Activated CD4-positive, alpha-beta T cell treated with anti-CD3 and anti-CD28 coated beads for 36 hours (primary cell): ENCODE measurements at regions of chr1 and their contacts with region 1.

Region 1: DNA sequence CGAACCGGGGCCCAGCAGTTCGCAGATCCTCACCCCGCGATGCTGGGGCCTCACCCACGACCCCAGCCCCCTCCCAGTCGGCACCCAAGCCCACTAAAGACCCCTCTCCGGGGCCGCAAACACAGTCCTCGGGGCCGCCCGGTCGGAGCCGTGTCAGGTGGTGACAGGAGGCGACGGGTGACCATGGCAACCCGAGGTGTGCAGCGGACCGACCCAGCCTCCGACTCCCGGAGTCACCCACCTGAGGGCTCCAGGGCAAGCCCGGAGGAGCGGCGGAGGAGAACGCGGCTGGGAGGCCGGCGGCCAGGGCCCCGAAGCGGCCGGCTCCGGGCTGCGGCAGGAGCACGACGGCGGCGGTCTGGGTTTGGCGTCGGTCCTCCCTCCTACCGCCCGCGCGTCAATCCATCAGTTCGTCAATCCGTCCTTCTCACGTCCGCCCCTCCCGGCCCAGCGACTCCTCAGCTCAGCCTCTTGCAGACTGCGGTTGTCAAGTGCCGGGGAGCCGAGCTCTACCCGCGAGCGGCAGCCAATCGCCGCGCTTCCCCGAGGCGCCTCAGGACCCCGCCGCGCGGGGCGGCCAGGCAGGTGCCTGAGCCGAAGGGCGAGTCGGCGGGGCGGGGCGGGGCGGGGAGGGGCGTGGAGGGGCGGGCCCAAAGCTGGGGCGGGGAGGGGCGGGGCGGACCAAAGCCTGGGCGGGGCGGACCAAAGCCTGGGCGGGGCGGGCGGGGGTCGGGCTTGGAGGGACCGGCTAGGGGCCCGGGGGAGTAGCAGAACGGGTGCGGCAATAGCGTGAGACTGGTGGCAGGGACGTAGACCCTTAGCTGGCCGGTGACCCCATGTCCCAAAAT is at the start of gene WDR47:
- DNase-seq: peak; percentile 98
- ATAC-seq: peak; percentile 99
- H3K4me3 Mint-ChIP-seq: peak within 1 kb of the TSS; percentile 82
- H3K27ac Mint-ChIP-seq: peak within 1 kb of the TSS; percentile 65
- H3K4me1 Mint-ChIP-seq: peaks cover 16% of the 10 kb centered on the region
- H3K27me3 Mint-ChIP-seq: no peaks in the 10 kb centered on the region
- total RNA-seq, gene WDR47: 6.9 to 7.6 TPM

Region 2: DNA sequence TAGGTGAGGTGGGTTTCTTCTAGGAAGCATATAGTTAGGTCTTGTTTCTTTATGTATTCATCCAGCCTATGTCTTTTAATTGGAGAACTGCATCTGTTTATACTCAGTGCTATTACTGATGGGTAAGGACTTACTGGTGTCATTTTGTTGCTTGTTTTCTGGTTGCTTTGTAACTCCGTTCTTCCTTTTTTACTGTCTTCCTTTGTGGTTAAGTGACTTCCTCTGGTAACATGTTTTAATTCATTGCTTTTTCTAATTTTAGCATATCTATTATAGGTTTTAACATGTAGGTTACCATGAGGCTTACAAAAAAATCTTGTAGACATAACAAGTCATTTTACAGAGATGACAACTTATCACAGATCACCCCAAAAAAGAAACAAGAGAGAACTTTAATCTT is 1237.7 kb before region 1 on chr1:
- CTCF ChIA-PET with region 1: no interaction called
- POLR2A ChIA-PET with region 1: no interaction called
- intact Hi-C with region 1: no loop called
- DNase-seq: no peak
- ATAC-seq: peak; percentile 74
- H3K4me3 Mint-ChIP-seq: no peak overlapping the region
- H3K27ac Mint-ChIP-seq: peak overlapping the region; percentile 5
- H3K4me1 Mint-ChIP-seq: peaks cover 33% of the 10 kb centered on the region
- H3K27me3 Mint-ChIP-seq: no peaks in the 10 kb centered on the region

Region 3: DNA sequence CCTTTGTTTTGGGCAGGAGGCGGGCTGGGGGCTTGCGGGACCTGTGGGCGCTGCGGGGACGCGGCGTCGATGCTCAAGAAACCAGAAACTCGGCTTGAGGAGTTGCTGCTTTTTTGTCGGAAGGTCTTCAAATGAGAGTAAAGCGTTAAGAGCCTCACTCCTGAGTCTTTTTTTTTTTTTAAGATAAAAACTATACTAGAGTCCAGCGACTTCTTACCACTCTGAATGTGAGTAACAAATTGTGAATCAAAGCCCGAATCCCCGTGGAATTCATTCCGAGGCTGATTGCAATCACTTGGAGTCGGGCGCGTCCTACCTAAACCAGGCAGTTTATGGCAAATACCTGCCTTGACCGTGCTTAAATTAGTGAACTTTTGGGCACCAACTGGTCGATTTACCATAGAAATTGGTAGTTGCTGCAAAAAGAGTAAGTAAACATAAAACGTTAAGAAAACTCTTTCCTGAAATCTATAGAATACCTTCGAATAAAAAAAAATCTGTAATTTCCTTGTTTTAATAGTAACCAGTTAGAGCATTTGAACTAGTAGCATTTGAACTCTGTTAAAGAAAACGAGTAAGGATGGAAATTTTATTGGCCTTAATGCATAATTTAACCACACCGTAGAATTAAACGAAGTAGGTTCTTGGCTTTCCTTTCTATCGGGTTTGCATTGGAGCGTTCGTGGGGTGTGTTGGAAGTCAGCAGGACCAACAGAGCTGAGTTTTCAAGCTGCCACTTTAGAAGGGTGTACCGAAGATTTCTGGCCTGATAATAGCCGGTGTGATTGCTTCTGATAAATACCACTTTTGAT is 164.3 kb before region 1 on chr1:
- CTCF ChIA-PET with region 1: no interaction called
- POLR2A ChIA-PET with region 1: no interaction called
- intact Hi-C with region 1: loop called in 1 of 2 experiments (anchors 1 kb)
- DNase-seq: no peak
- ATAC-seq: peak; percentile 2
- H3K4me3 Mint-ChIP-seq: peak overlapping the region; percentile 91
- H3K27ac Mint-ChIP-seq: peak overlapping the region; percentile 78
- H3K4me1 Mint-ChIP-seq: peaks cover 5% of the 10 kb centered on the region
- H3K27me3 Mint-ChIP-seq: peaks cover 5% of the 10 kb centered on the region

Region 4: GRCh38 chr1:108963052-108963686 is 78.7 kb before region 1 on chr1 and contains the start of gene CLCC1:
- CTCF ChIA-PET with region 1: no interaction called
- POLR2A ChIA-PET with region 1: no interaction called
- intact Hi-C with region 1: loop called (anchors 2 kb)
- DNase-seq: peak; percentile 96
- ATAC-seq: peak; percentile 97
- H3K4me3 Mint-ChIP-seq: peak within 1 kb of the TSS; percentile 81
- H3K27ac Mint-ChIP-seq: peak within 1 kb of the TSS; percentile 91
- H3K4me1 Mint-ChIP-seq: peaks cover 26% of the 10 kb centered on the region
- H3K27me3 Mint-ChIP-seq: no peaks in the 10 kb centered on the region
- total RNA-seq, gene CLCC1: 15.7 to 17.1 TPM

Region 5: DNA sequence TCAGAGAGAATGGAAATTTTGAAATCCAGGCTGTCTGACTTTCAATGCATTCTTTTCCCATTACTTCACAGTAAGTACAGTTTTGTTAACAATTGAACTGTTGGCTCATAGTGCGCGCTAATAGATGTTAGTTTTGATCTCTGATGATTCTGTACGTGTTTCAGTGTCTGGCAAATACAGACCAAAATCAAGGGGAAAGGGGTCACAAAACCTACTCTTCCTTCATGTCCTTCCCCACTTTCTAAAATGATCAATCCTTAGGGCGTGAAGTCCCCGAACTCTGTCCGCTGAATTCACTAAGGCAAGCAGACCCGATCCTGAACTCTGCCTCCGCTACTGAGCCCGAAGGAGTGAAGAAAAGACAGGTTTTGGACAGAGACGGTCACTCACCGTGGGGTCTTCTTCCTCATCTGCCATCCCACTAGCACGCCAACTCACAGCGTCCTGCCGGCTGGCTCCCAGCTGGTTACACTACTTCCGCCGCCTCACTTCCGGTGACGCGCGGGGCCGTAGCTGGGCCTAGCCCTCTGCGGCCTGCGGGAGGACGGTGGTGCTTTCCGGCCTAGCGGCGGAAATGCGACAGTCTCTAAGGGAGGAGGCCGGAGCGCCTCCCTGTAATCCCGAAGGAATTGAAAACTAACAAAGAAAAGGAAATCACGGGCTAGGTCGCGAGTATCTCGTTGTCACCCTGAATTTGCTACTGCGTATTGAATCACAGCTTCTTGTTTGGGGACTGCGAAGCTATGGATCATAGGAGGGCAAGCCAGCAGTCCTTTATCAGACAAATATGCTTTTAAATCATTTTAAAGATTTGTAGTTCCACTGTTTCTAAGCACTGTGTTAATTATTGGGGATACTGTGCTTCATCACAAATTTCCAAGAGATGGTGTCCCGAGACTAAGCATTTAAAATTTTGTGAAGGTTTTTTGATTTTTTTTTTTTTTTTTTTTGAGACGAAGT is 34.0 kb after region 1 on chr1 and contains the start of gene TAF13:
- CTCF ChIA-PET with region 1: interaction called, 3 read pairs
- POLR2A ChIA-PET with region 1: interaction called, 3 read pairs
- intact Hi-C with region 1: loop called in 1 of 2 experiments (anchors 1 kb)
- DNase-seq: peak; percentile 93
- ATAC-seq: peak; percentile 99
- H3K4me3 Mint-ChIP-seq: peak within 1 kb of the TSS; percentile 95
- H3K27ac Mint-ChIP-seq: peak within 1 kb of the TSS; percentile 94
- H3K4me1 Mint-ChIP-seq: peaks cover 10% of the 10 kb centered on the region
- H3K27me3 Mint-ChIP-seq: no peaks in the 10 kb centered on the region
- total RNA-seq, gene TAF13: 12.1 to 20.1 TPM